Posterior vena cava (tissue), 2 donors: ENCODE measurements at regions of chrX and their contacts with region 1.

Region 1: GRCh38 chrX:57643698-57644097 is 36.4 kb downstream of the NLRP2B start:
- DNase-seq: no peak

Region 2: DNA sequence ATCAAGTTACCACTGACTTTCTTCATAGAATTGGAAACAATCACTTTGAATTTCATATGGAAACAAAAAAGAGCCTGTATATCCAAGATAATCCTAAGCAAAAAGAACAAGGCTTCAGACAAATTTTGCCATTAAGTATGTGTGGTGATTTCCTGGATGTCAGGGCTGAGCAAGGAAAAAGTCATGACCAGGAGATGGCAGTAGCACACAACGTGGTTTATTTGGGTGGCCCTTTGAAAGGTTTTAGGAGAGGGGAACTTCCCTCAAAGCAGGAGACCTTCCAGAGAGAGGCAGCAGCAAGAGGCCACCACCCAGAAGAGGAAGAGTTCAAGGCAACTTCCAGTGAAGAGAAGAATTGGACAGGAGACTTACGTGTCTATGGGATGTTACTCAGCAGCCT is 69.9 kb before region 1 on chrX:
- intact Hi-C with region 1: loop called in 1 of 2 experiments (anchors 10 kb)
- DNase-seq: no peak